Dendritic cell treated with granulocyte-macrophage colony-stimulating factor and Interleukin-4, amounts not matched to agents 40 ng/mL and 50 ng/mL, for 4 days (primary cell): ENCODE measurements at regions of chr5 and their contacts with region 1.

Region 1: GRCh38 chr5:163459922-163460766 is at the starts of genes HMMR and NUDCD2:
- H3K4me3 Mint-ChIP-seq: peak within 1 kb of the TSS; percentile 93
- H3K27ac Mint-ChIP-seq: peak within 1 kb of the TSS; percentile 99
- H3K4me1 Mint-ChIP-seq: peaks cover 24% of the 10 kb centered on the region
- H3K27me3 Mint-ChIP-seq: no peaks in the 10 kb centered on the region

Region 2: DNA sequence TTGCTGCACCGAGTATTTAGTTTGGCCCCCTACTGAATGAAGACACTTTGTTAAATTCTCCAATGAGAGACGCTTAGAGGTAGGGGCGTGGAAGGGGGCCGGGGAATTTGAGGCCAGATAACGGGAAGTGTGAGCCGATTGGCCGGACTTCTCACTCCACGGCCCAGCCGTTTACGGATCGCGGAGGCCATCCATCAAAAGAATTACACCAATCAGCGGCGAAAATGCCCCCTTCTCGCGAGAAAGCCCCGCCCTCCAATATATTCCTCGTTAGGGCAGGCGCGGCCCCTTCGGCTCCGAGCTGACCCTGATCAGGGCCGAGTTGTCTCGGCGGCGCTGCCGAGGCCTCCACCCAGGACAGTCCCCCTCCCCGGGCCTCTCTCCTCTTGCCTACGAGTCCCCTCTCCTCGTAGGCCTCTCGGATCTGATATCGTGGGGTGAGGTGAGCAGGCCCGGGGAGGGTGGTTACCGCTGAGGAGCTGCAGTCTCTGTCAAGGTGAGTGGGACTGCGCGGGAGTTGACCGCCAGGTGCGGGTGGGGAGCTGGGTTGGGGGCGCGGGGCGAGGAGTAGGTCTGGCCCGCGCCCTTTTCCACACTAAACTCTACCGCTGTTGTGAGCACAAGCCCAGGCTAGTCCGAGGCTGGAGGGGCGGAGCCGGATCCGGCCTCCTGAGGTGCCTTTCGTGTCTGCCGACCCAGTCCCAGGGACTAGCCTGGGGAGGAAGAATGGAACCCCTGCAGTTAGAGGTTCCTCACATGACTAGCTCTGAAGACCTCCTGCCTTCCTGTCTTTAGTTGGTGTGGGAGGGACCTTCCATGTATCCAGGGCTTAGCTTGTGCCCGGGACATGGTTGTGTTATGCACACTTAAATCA is 22.6 kb before region 1 on chr5 and contains the start of gene CCNG1:
- intact Hi-C with region 1: loop called (anchors 1 kb)
- H3K4me3 Mint-ChIP-seq: peak within 1 kb of the TSS; percentile 86
- H3K27ac Mint-ChIP-seq: peak within 1 kb of the TSS; percentile 91
- H3K4me1 Mint-ChIP-seq: peaks cover 32% of the 10 kb centered on the region
- H3K27me3 Mint-ChIP-seq: no peaks in the 10 kb centered on the region

Region 3: DNA sequence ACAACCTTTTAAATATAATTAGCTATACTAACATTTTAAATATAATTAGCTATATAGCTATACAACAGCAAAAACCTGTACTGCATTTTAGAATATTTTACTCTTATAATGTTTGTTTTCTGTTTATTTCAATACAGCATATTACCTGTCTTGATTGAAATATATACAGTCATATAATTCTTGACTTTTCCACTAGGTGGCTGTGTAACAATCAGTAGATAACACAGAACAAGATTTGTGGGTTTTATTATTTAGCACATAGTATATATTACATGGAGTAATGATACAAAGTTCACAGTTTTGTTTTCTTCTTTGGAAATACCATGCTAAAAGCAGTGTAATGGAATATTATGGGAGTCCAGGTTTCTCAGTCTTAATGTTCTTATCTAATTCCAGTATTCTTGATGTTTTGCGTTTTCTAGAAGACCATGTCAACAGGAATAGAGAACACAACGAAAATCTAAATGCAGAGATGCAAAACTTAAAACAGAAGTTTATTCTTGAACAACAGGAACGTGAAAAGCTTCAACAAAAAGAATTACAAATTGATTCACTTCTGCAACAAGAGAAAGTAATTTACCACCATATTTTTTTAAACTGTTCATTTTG is 13.6 kb after region 1 on chr5:
- intact Hi-C with region 1: loop called (anchors 2 kb)
- H3K4me3 Mint-ChIP-seq: no peak overlapping the region
- H3K27ac Mint-ChIP-seq: no peak overlapping the region
- H3K4me1 Mint-ChIP-seq: peaks cover 5% of the 10 kb centered on the region
- H3K27me3 Mint-ChIP-seq: no peaks in the 10 kb centered on the region

Region 4: DNA sequence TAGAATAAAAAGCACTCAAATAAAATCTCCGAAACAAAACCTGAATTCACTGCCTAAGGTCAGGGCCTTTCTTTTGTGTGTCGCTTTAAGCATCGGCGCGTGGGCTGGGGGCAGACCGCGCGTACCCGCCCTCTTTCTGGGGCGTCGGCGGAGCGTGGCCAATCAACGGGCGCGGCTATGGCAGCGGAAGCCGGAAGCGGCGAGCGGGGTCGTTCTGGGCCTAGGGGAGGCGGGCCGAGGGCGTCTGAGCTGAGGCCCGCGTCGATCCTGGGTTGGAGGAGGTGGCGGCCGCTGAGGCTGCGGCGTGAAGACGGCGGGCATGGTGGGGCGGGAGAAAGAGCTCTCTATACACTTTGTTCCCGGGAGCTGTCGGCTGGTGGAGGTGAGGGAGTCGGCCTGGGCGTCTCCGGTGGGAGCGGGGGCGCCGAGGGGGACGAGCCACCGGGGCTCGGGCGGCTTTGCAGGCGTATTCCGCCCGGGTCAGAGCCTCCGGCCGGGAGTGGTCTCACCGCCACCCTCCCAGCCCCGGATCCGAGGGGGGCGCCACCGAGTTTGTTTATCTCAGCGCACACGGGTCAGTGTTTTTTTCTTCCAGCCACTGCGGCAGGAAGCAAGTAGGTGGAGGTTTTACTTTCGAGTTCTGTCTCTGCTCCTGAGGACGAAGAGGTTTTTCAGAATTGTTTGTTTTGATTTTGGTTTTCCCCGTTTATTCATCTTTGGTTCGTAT is 45.4 kb after region 1 on chr5 and contains the start of gene MAT2B:
- intact Hi-C with region 1: loop called (anchors 1 kb)
- H3K4me3 Mint-ChIP-seq: peak within 1 kb of the TSS; percentile 88
- H3K27ac Mint-ChIP-seq: peak within 1 kb of the TSS; percentile 99
- H3K4me1 Mint-ChIP-seq: peaks cover 13% of the 10 kb centered on the region
- H3K27me3 Mint-ChIP-seq: no peaks in the 10 kb centered on the region